ENCODE measurements at regions of chr21 and their contacts with region 1.

Region 1: GRCh38 chr21:38355992-38356797 is 99.4 kb downstream of the KCNJ15 start:
- DNase-seq: peak; percentile 86
- CTCF ChIP-seq: peak; percentile 89

Region 2: DNA sequence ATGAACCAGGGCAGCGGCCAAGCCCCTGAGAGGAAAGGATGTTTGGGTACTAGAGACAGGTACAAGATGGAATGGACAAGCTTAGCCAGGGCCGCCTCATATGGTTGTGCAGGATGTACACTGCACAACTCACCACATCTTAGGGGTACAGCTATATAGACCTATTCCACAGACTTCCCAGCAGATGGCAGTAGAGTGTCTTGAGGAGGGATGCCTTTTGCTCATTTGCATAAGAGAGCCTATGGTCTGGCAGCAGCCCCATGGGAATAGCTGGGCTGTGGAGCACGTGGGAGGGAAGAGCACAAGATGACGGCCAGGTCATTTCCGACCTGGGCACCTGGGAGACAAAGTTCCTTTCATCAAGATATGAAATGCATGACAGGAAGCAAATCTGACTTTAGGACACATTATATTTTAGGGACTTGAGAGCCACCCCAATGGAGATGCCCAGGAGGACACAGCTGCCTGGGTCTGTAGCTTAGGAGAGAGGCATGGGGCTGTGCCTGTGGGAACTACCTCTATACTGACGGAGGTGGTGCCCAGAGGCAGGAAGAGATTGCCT is 655.5 kb before region 1 on chr21:
- in situ Hi-C with region 1: loop called (anchors 25 kb)
- DNase-seq: peak; percentile 81
- CTCF ChIP-seq: peak; percentile 30

Region 3: GRCh38 chr21:38159355-38159754 is 196.8 kb before region 1 on chr21:
- in situ Hi-C with region 1: loop called (anchors 10 kb)
- DNase-seq: peak; percentile 59
- CTCF ChIP-seq: peak; percentile 72

Region 4: GRCh38 chr21:38205940-38206339 is 150.3 kb before region 1 on chr21:
- in situ Hi-C with region 1: loop called (anchors 10 kb)
- DNase-seq: no peak
- CTCF ChIP-seq: no peak

Region 5: DNA sequence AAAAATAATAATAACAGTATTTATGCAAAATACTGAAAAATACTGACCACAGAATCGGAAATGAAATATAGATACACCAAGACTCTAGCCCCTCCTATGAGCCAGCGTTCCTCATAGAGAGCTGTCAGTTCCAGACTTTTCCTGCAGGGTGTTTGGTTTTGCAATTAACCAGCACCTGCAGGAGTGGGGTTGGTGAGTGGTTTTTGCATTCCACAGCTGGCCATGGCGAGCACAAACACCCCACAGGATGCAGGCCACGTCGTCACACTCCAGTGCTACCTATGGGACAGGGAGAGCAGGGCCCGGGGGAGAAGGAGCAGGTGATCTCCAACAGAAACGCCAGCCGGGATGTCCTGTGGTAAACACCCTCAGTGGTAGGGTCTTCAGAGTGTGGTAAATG is 48.0 kb after region 1 on chr21:
- in situ Hi-C with region 1: no loop called
- DNase-seq: no peak
- CTCF ChIP-seq: no peak